A549 (cell line): ENCODE measurements at regions of chr21 and their contacts with region 1.

Region 1: DNA sequence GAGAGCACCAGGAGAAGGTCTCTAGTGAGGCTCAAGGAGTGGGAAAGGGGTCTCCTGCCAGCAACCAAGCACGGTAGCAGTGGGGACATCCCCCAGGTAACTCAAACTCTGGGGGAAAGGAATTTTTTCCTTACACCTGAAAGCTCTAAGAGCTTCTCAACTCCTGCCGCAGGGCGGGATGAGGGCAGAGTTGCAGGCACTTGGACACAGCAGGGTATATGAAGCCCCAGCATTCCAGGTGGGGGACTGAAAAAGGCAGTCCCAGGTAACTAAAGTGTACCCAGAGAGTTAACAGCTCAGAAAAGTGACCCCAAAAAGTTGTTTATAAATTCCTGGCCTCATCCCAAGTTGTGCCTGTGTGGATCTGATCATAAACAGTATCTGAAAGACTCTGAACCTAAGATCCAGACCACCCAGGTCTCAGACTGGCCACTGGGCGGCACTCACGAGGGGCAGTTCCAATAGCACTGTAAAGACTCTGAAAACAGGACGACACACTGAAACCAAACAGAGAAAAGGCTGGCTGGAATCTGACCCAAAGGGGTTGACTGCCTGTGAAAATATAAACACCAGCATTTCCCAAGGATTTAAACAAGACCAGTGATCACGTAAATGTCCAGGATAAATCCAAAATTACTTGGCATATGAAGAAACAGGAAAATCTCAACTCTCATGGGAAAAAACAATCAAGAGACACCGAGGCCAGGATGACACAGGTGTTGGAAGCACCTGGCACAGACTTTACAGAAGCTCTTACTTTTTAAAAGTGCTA is 47.5 kb downstream of the HSF2BP start:
- DNase-seq: peak; percentile 58 to 83
- ATAC-seq: peak; percentile 93 to 97
- H3K4me3 ChIP-seq: no peak overlapping the region
- H3K27ac ChIP-seq: peak overlapping the region; percentile 92
- H3K4me1 ChIP-seq: peaks cover 51% of the 10 kb centered on the region
- CTCF ChIP-seq: peak; percentile 68
- EP300 ChIP-seq: no peak
- POLR2A ChIP-seq: no peak
- RAD21 ChIP-seq: peak; percentile 69 to 74

Region 2: DNA sequence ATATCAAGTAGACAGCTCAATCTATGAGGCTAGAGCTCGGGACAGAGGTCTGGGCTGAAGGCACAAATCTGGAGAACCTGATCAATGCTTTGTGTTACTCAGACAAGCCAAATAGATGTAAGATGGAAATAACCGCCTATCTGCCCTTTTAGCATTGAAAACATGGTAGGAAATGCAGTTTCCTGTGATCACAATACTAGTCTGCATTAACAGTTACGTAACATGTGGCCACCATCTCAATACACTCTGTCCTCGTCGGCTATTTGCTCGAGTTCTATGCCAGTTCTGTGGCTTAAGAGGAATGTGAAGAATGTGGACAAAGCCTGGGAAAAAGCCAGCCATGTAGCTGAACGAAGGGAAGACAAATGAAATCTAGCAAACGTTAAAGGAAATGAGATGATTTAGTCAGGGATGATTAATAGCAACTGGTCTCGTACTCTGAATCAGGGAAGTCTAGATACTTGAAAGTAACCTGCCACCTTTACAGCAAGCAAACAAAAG is 25.8 kb before region 1 on chr21:
- CTCF ChIA-PET with region 1: interaction called, 25 read pairs
- POLR2A ChIA-PET with region 1: no interaction called
- DNase-seq: peak; percentile 78 to 98
- ATAC-seq: peak; percentile 98 to 99
- H3K4me3 ChIP-seq: no peak overlapping the region
- H3K27ac ChIP-seq: peak overlapping the region; percentile 96 to 98
- H3K4me1 ChIP-seq: peaks cover 63% of the 10 kb centered on the region
- CTCF ChIP-seq: no peak
- EP300 ChIP-seq: peak; percentile 91 to 96; a peak in 4 of 5 replicates
- POLR2A ChIP-seq: no peak
- RAD21 ChIP-seq: peak; percentile 29 to 60

Region 3: GRCh38 chr21:43593078-43593477 is 18.7 kb before region 1 on chr21:
- CTCF ChIA-PET with region 1: interaction called, 25 read pairs
- POLR2A ChIA-PET with region 1: interaction called, 4 read pairs
- DNase-seq: no peak
- ATAC-seq: no peak
- H3K4me3 ChIP-seq: no peak overlapping the region
- H3K27ac ChIP-seq: peak overlapping the region; percentile 86 to 98
- H3K4me1 ChIP-seq: peaks cover 83% of the 10 kb centered on the region
- CTCF ChIP-seq: no peak
- EP300 ChIP-seq: no peak
- POLR2A ChIP-seq: no peak
- RAD21 ChIP-seq: no peak

Region 4: DNA sequence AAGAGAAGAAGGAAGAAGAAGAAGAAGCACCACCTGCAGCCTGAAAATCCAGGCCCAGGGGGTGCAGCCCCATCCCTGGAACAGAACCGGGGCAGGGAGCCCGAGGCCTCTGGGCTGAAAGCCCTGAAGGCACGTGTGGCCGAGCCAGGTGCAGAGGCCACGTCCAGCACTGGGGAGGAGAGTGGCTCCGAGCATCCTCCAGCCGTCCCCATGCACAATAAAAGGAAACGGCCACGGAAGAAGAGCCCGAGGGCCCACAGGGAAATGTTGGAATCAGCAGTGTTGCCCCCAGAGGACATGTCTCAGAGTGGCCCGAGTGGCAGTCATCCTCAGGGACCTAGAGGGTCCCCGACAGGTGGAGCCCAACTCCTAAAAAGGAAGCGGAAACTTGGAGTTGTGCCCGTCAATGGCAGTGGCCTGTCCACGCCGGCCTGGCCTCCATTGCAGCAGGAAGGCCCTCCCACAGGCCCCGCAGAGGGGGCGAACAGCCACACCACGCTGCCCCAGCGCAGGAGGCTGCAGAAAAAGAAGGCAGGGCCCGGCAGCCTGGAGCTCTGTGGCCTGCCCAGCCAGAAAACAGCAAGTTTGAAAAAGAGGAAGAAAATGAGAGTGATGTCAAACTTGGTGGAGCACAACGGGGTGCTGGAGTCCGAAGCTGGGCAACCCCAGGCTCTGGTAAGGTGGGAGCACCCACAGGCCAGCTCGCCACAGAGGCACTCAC is 75.9 kb after region 1 on chr21:
- CTCF ChIA-PET with region 1: no interaction called
- POLR2A ChIA-PET with region 1: no interaction called
- DNase-seq: no peak
- ATAC-seq: no peak
- H3K4me3 ChIP-seq: no peak overlapping the region
- H3K27ac ChIP-seq: no peak overlapping the region
- H3K4me1 ChIP-seq: no peaks in the 10 kb centered on the region
- CTCF ChIP-seq: no peak
- EP300 ChIP-seq: no peak
- POLR2A ChIP-seq: no peak
- RAD21 ChIP-seq: no peak